Ascending aorta (tissue), 2 donors: ENCODE measurements at regions of chr9 and their contacts with region 1.

Region 1: GRCh38 chr9:107637421-107638420 is 148.2 kb upstream of the KLF4 start:
- DNase-seq: peak; percentile 80 to 98
- H3K4me3 ChIP-seq: peak overlapping the region; percentile 54 to 62
- H3K27ac ChIP-seq: peak overlapping the region; percentile 98 to 99
- H3K4me1 ChIP-seq: peaks cover 3 to 16% of the 10 kb centered on the region in 2 donors
- H3K27me3 ChIP-seq: no peaks in the 10 kb centered on the region
- CTCF ChIP-seq: peak; percentile 19 to 38 (median 23)

Region 2: DNA sequence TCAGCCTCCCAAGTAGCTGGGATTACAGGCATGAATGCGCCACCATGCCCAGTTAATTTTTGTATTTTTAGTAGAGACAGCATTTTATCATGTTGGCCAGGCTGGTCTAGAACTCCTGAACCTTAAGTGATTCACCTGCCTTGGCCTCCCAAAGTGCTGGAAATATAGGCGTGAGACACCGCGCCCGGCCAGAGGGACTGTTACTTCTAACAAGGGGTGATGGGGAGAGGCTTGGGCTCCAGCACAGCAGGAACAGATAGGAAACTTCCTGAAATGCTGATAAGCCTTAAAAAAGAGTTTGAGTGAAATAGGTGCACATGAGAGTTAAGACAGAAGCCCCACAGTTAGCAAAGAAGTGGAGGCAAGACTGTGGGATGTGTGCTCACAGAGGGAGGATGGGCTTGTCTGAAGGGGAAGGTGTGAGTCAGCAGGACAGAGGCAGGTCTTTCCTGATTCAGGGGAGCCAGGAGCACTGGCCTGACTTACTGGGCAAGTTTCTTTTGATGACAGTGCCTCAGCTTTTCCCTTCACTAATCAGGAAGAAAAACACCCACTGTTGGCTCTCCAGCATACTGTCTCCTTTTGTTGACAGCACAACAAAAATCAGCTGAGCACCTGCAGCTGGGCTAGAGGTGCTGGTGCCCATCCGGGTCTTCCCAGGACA is 286.2 kb before region 1 on chr9:
- intact Hi-C with region 1: no loop called
- DNase-seq: no peak
- H3K4me3 ChIP-seq: no peak overlapping the region
- H3K27ac ChIP-seq: no peak overlapping the region
- H3K4me1 ChIP-seq: no peaks in the 10 kb centered on the region
- H3K27me3 ChIP-seq: no peaks in the 10 kb centered on the region
- CTCF ChIP-seq: no peak

Region 3: GRCh38 chr9:107489687-107490605 is 147.8 kb before region 1 on chr9 and contains the start of gene KLF4:
- intact Hi-C with region 1: loop called (anchors 1 kb)
- DNase-seq: peak; percentile 63 to 95
- H3K4me3 ChIP-seq: peak within 1 kb of the TSS; percentile 95
- H3K27ac ChIP-seq: peak within 1 kb of the TSS; percentile 92 to 96
- H3K4me1 ChIP-seq: peaks cover 0 to 22% of the 10 kb centered on the region in 2 donors
- H3K27me3 ChIP-seq: no peaks in the 10 kb centered on the region
- CTCF ChIP-seq: no peak
- total RNA-seq, gene KLF4: 444 TPM

Region 4: GRCh38 chr9:107732781-107733522 is 95.2 kb after region 1 on chr9:
- intact Hi-C with region 1: loop called (anchors 1 kb)
- DNase-seq: peak in 1 of 2 donors; percentile 87
- H3K4me3 ChIP-seq: peak overlapping the region; percentile 16 to 40
- H3K27ac ChIP-seq: peak overlapping the region; percentile 83 to 86
- H3K4me1 ChIP-seq: peaks cover 0 to 16% of the 10 kb centered on the region in 2 donors
- H3K27me3 ChIP-seq: no peaks in the 10 kb centered on the region
- CTCF ChIP-seq: no peak

Region 5: GRCh38 chr9:107847978-107848964 is 210.6 kb after region 1 on chr9:
- intact Hi-C with region 1: loop called (anchors 5 kb)
- DNase-seq: no peak
- H3K4me3 ChIP-seq: no peak overlapping the region
- H3K27ac ChIP-seq: peak overlapping the region; percentile 62 to 68
- H3K4me1 ChIP-seq: peaks cover 0 to 10% of the 10 kb centered on the region in 2 donors
- H3K27me3 ChIP-seq: no peaks in the 10 kb centered on the region
- CTCF ChIP-seq: no peak

Region 6: DNA sequence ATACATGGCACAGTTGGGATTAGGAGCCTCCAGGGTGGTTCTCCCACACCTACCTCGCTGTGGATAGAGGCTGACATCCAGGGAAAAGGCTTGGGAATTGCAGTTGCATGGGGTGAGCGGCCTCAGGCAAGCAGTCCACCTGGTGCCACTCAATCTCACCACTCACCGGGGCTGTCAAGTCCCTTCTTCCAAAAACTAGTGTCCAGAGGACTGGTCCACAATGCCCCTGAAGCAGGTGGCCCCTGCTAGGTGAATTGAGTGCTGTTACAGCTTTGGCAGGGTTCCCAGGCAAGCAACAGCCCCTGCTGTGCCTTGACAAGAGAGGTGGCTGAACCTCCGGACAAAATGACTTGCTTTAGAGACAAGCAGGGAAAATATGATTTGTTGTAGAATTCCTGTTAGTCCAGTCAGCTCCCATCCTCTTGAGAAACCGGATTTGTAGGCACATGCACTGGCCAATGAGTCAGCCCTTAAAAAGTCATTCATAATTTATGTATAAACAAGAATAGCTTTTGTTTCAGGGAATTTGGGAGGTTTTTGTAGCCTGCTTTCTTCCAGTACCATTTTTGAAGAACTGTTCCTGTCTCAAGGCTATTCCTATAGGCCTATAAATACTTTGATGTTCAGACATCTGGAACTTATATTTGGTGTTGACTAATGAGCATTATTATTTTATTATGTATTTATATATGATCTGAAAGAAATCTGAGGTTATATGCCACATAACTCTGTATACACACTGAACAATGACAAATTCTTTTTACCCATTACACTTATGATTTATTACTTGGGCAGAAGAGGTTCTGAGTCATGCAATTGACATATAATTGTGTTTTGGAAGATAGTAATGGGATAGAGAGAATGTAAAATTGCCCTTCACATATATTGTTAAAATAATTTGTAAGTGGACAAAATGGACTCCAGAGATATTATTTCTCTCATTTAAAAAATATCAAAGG is 807.0 kb after region 1 on chr9:
- intact Hi-C with region 1: loop called (anchors 10 kb)
- DNase-seq: peak; percentile 10 to 75
- H3K4me3 ChIP-seq: peak overlapping the region in 1 of 2 donors; percentile 16
- H3K27ac ChIP-seq: peak overlapping the region; percentile 63 to 69
- H3K4me1 ChIP-seq: peaks cover 0 to 37% of the 10 kb centered on the region in 2 donors
- H3K27me3 ChIP-seq: no peaks in the 10 kb centered on the region
- CTCF ChIP-seq: no peak

Region 7: GRCh38 chr9:108761655-108762347 is 1124.1 kb after region 1 on chr9:
- intact Hi-C with region 1: loop called (anchors 10 kb)
- DNase-seq: peak in 1 of 2 donors; percentile 68
- H3K4me3 ChIP-seq: no peak overlapping the region
- H3K27ac ChIP-seq: no peak overlapping the region
- H3K4me1 ChIP-seq: peaks cover 0 to 2% of the 10 kb centered on the region in 2 donors
- H3K27me3 ChIP-seq: no peaks in the 10 kb centered on the region
- CTCF ChIP-seq: peak; percentile 73 to 86 (median 75)

Region 8: DNA sequence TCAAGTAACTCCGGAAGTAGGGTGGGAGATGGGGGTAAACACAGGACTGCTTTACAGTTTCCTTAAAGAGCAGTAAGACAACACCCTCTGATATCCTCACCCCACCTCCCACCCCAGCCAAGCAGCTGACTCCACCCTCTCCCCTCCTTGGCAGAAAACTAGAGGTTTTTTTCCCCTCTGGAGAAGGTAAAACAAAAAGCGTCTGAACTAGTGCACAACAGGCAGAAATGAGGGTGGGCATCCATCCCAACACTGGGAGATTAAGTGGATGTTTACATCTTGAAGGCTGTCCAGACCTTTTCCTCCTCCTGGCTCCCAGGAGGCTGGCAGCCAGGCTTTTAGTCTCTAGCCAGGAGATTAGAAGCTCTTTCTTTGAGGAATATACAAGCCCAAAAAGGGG is 1389.5 kb after region 1 on chr9:
- intact Hi-C with region 1: no loop called
- DNase-seq: no peak
- H3K4me3 ChIP-seq: no peak overlapping the region
- H3K27ac ChIP-seq: peak overlapping the region in 1 of 2 donors; percentile 55
- H3K4me1 ChIP-seq: peaks cover 0 to 6% of the 10 kb centered on the region in 2 donors
- H3K27me3 ChIP-seq: no peaks in the 10 kb centered on the region
- CTCF ChIP-seq: no peak